Activated T-helper 2 cell treated with anti-CD3 and anti-CD28 coated beads, Interferon-gamma antibody, Interleukin-2, Interleukin-4, amounts not matched to agents 10 μg/mL and 5 μg/mL and 100 μg/mL, durations not matched to agents 14 hours and 24 hours and 36 hours (primary cell): ENCODE measurements at regions of chr20 and their contacts with region 1.

Region 1: DNA sequence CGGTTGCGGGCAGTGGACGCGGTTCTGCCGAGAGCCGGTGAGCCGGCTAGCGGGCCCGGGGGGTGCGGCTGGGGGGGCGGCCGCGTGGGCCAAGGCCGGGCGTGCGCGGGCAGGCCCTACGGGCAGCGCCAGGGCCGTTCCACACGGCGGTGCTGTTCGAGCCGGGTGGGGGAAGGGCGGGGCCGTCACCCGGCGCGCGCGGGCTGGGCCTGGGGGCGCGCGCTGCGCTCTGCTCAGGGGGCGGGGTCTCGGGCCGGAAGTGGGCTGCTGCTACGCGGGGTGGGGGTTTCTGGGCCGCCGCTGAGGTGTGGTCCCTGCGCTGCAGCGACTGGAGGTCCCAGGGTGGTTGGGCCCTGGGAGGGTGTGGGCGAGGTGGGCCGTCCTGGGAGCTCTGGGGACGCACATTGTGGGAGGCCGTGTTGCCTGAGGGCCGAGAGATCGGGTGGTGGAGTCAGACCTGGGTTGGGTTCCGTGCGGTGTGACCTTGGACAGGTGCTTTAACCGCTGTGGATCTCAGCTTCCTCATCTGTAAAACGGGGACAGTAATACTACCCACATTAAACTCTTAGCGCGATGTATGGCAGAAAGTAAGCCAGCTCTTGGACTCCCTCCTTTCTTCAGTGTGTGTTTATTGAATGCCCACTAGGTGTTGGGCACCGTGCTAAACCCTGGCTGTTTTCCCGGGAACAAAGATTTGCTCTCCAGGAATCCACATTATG is 397 bp downstream of the MAPRE1 start:
- DNase-seq: no peak
- H3K4me3 Mint-ChIP-seq: peak overlapping the region; percentile 95
- H3K27ac Mint-ChIP-seq: peak overlapping the region; percentile 95
- H3K4me1 Mint-ChIP-seq: peaks cover 32% of the 10 kb centered on the region
- H3K27me3 Mint-ChIP-seq: no peaks in the 10 kb centered on the region

Region 2: DNA sequence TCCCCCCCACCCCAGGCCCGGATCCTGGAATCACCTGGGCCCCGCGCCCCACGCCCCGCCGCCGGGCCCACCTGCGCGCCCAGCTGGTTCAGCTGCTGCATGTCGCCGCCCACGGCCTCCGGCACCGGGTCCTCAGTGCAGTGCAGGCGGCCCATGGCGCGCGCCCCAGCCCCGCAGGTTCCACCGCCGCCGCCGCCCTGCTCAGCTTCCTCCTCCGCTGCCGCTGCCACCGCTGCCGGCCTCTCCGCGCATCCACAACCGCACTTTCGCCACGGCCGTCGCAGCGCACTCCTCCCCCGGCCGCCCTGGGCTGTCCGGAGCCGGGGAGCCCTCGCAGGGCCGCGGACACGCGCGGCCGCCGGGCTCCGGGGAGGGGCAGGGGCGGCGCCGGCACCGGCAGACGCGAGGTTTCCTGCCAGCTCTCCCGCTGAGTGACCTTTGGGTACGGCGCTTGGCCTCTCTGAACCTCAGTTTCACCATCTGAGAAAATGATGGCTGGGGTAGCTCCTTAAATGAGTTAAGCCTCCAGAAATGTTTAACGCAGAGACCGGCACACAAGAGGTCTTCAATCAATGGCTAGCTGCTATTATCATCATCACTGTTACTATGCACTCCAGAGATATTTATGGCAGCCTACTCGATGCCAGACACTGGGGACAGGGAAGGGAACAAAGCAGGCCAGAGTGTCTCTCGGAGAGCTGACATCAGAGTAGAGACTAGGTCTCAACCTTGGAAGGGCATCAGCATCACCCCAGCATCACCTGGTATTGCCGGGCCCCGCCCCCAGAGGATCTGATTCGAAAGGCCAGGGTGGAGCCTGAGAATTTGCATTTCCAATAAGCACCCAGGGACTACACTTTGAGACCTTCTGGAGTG is 76.7 kb before region 1 on chr20 and contains the start of gene COMMD7:
- intact Hi-C with region 1: loop called (anchors 2 kb)
- DNase-seq: peak; percentile 67
- H3K4me3 Mint-ChIP-seq: peak within 1 kb of the TSS; percentile 97
- H3K27ac Mint-ChIP-seq: peak within 1 kb of the TSS; percentile 99
- H3K4me1 Mint-ChIP-seq: peaks cover 26% of the 10 kb centered on the region
- H3K27me3 Mint-ChIP-seq: no peaks in the 10 kb centered on the region
- total RNA-seq, gene COMMD7: 55.7 and 56.5 TPM in 2 replicates